ENCODE measurements at regions of chr17 and their contacts with region 1.

Region 1: GRCh38 chr17:73429440-73430164 is 117.8 kb upstream of the CDC42EP4 start:
- DNase-seq: peak; percentile 84 to 90 (median 89)
- ATAC-seq: peak; percentile 93 to 98 (median 96)
- H3K4me3 ChIP-seq: no peak overlapping the region
- H3K27ac ChIP-seq: no peak overlapping the region
- H3K4me1 ChIP-seq: no peaks in the 10 kb centered on the region
- H3K27me3 ChIP-seq: no peaks in the 10 kb centered on the region
- CTCF ChIP-seq: peak; percentile 86 to 98 (median 96)
- POLR2A ChIP-seq: no peak

Region 2: GRCh38 chr17:73506257-73507050 is 76.9 kb after region 1 on chr17:
- intact Hi-C with region 1: no loop called
- DNase-seq: no peak
- ATAC-seq: no peak
- H3K4me3 ChIP-seq: no peak overlapping the region
- H3K27ac ChIP-seq: no peak overlapping the region
- H3K4me1 ChIP-seq: no peaks in the 10 kb centered on the region
- H3K27me3 ChIP-seq: no peaks in the 10 kb centered on the region
- CTCF ChIP-seq: no peak
- POLR2A ChIP-seq: no peak

Region 3: DNA sequence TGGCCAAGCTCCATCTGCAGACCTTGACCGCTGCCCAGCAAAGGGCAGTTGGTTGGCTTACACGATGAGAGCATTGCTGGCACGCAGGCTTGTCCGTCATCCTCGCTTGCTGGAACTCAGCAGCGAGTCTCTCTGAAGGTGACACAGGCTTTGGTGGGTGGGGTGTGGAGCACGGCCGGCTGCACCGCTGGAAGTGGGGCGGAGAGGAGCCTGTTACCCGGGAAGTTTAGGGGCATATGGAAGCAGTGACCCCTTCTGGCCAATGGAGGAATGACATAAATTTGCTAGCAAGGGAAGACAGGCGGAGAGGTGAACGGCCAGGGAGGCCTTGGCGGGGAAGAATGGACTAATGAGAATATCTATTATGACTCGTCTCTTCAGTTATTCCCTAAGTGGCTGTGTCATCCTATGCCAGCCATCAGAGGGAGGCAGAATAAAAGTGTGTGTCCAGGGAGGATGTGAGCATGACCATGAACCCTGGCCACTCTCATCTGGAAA is 280.5 kb after region 1 on chr17:
- intact Hi-C with region 1: loop called (anchors 10 kb)
- DNase-seq: peak in 2 of 3 donors; percentile 58 to 64
- ATAC-seq: peak; percentile 76 to 92 (median 84)
- H3K4me3 ChIP-seq: no peak overlapping the region
- H3K27ac ChIP-seq: no peak overlapping the region
- H3K4me1 ChIP-seq: peaks cover 0 to 3% (median 0%) of the 10 kb centered on the region in 4 donors
- H3K27me3 ChIP-seq: no peaks in the 10 kb centered on the region
- CTCF ChIP-seq: peak; percentile 63 to 83 (median 79)
- POLR2A ChIP-seq: no peak

Region 4: GRCh38 chr17:73855720-73856333 is 426.2 kb after region 1 on chr17:
- intact Hi-C with region 1: loop called in 1 of 2 experiments (anchors 10 kb)
- DNase-seq: no peak
- ATAC-seq: no peak
- H3K4me3 ChIP-seq: no peak overlapping the region
- H3K27ac ChIP-seq: no peak overlapping the region
- H3K4me1 ChIP-seq: no peaks in the 10 kb centered on the region
- H3K27me3 ChIP-seq: no peaks in the 10 kb centered on the region
- CTCF ChIP-seq: no peak
- POLR2A ChIP-seq: no peak

Region 5: DNA sequence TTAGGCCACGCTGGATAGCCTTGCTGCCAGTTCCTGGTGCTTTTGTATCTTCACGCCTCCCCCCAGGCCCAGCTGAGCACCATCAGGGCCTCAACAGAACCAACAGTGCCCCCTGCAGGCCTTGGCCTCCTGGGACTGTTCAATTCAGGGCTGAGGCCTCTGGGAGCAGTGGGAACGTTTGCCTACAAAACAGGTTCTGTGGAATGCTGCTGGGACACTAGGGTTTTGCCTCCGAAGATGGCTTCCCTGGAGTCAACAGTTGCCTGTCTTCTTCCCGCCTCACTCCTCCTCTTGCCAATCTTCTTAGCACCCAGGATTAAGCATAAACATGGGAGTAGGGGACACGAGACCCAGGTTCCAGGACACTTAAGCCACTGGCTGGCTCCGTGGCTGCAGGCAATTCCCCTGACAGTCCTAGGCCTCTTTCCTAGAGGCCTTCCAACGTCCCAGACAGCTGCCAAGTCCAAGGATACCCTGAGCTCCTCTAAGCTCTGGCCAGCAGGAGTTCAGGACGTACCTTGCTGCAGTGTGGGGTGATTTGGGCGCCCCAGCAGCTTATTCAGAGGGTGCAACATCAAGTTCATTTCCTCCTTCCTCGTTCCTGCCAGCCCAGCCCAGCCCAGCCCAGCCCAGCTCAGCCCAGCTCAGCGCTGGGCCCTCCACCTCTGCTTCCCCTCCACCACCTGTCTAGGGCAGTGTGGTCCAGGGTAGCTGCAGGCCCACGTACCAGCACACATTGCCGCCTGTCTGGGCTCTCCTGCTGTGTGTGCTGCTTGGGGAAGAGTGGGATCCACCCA is 527.3 kb after region 1 on chr17:
- intact Hi-C with region 1: loop called in 1 of 2 experiments (anchors 10 kb)
- DNase-seq: peak; percentile 56 to 68 (median 61)
- ATAC-seq: peak; percentile 77 to 82 (median 80)
- H3K4me3 ChIP-seq: no peak overlapping the region
- H3K27ac ChIP-seq: no peak overlapping the region
- H3K4me1 ChIP-seq: no peaks in the 10 kb centered on the region
- H3K27me3 ChIP-seq: peaks cover 0 to 11% of the 10 kb centered on the region in 2 donors
- CTCF ChIP-seq: peak; percentile 44 to 70 (median 56)
- POLR2A ChIP-seq: no peak

Region 6: GRCh38 chr17:74176546-74177001 is 747.0 kb after region 1 on chr17:
- intact Hi-C with region 1: loop called in 1 of 2 experiments (anchors 10 kb)
- DNase-seq: peak in 2 of 3 donors; percentile 60
- ATAC-seq: peak; percentile 79 to 91 (median 89)
- H3K4me3 ChIP-seq: no peak overlapping the region
- H3K27ac ChIP-seq: no peak overlapping the region
- H3K4me1 ChIP-seq: no peaks in the 10 kb centered on the region
- H3K27me3 ChIP-seq: no peaks in the 10 kb centered on the region
- CTCF ChIP-seq: peak; percentile 68 to 80 (median 74)
- POLR2A ChIP-seq: no peak

Measured in right lobe of liver (tissue), 6 donors.